ENCODE measurements at regions of chr3 and their contacts with region 1.

Region 1: GRCh38 chr3:196502775-196503195 is 783 bp downstream of the RNF168 start:
- DNase-seq: peak in 1 of 2 donors; percentile 81
- H3K4me3 ChIP-seq: peak overlapping the region; percentile 76 to 90
- H3K27ac ChIP-seq: peak overlapping the region; percentile 94 to 97
- H3K4me1 ChIP-seq: peaks cover 3 to 10% of the 10 kb centered on the region in 2 donors
- H3K27me3 ChIP-seq: no peaks in the 10 kb centered on the region
- CTCF ChIP-seq: no peak

Region 2: DNA sequence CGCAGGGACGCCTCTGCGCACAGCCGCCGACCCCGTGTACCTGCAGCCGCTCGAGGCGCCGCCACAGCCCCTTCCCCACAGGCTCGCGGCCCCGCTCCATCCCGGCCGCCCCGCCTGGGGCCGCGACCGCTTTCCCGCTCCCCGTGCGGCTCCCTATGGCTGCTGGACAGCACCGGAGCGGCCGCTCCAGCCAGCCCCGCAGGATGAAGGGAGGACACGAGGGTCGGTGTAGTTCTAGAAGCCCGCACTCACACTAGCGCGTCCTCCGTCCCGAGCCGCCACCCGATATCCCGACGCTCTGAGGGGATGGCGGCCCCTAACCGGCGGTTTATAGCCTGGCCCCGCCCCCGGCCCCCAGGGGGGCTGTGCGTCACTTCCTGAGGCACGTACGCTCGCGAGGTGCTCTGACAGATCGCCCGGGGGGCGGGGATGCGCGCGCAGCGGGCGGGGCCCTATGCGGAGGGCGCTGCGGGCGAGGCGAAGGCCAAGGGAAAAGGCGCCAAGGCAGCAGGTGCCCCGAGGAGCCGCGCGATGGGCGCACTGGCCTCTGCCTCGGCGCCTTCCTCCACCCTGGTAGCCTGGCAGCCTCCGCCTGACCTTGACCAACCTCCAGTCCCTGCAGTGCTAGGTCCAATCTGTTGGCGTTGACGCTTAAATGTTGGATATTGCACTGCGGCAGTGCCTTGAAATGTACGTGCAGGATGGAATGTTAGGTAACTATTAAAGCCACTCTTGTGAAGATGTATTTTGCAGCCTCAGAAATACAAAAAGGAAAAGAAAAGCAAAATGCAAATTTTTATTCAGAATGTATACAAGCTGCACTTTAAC is 420.8 kb before region 1 on chr3 and contains the start of gene TFRC:
- intact Hi-C with region 1: loop called (anchors 5 kb)
- DNase-seq: peak; percentile 66 to 95
- H3K4me3 ChIP-seq: peak within 1 kb of the TSS; percentile 74 to 92
- H3K27ac ChIP-seq: peak within 1 kb of the TSS; percentile 84
- H3K4me1 ChIP-seq: peaks cover 0 to 8% of the 10 kb centered on the region in 2 donors
- H3K27me3 ChIP-seq: no peaks in the 10 kb centered on the region
- CTCF ChIP-seq: no peak
- total RNA-seq, gene TFRC: 30.1 TPM

Region 3: DNA sequence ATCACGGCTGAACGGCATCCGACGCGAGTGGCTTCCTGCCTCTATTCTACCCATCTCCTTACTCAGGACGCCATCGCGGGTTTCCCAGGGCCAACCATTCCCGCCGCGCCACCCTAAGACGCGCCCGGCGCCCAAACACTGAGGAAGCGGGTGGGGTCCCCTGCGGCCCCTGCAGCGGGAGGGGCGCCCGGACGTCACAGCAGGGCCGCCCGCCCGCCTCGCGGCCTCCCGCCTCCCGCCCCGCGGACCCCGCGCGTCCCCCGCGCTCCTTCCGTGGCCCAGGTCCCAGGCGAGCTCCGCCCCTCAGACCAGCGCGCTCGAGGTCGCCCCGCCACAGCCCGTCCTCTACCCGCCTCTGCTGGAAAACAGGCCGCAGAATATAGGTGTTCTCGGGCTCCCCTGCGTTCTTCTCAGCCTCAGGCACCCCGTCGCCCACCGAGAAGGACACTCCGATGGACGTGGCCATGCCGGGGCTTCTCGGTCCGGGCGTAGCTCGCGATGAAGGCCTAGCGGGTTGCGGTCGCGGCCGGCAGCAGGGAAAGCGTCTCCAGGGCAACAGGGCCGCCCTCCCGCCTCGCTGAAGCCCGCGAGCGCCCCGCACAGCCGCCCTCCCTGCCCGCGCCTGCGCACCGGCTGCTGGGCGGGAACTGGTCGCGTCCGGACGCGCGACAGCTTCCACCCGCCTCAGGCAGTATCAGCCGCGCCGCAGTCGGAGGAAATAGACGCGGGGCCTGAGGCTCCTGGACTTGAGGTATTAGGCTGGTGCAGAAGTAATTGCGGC is 184.9 kb before region 1 on chr3 and contains the start of gene DYNLT2B:
- intact Hi-C with region 1: loop called (anchors 2 kb)
- DNase-seq: peak; percentile 49 to 91
- H3K4me3 ChIP-seq: peak within 1 kb of the TSS; percentile 92 to 97
- H3K27ac ChIP-seq: peak within 1 kb of the TSS; percentile 88 to 89
- H3K4me1 ChIP-seq: no peaks in the 10 kb centered on the region
- H3K27me3 ChIP-seq: no peaks in the 10 kb centered on the region
- CTCF ChIP-seq: no peak
- total RNA-seq, gene DYNLT2B: not detected

Region 4: DNA sequence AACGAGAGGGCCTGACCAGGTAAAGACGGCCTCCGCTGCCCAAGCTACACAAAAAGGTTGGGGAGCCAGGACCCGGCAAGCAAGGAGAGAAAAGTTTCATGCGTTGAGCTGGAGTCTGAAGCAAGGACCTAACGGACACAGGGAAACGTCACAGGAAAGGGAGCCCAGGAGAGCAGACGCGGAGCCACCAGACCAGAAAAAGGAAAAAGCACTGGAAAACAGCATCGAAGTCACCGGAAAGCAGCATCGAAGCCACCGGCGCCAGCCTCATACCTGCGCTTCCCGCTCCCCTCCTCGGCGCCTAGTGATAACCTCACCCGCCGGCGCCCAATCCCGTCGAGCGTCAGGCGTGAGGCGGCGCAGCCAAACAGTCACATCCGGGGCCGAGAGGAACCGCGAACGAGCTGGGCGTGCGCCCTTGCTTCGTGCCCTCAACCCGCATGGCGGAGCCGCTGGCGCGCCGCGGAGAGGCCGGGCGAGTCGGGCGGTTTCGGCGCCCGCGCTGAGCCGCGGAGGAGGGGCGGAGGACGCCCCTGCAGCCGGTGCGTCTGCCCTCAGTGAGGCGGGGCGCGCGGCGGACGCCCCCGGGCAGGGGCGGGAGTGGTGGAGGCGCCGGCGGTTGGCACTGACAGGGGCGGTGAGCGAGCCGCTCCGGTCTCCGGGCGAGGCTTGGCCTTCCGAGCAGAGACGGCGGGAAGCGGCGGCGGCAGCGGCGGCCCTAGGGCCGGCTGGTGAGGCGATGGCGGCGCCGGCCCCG is 65.6 kb after region 1 on chr3 and contains the starts of genes FBXO45 and WDR53:
- intact Hi-C with region 1: loop called (anchors 2 kb)
- DNase-seq: peak; percentile 86 to 96
- H3K4me3 ChIP-seq: peak within 1 kb of the TSS; percentile 92 to 94
- H3K27ac ChIP-seq: peak within 1 kb of the TSS; percentile 85 to 92
- H3K4me1 ChIP-seq: peaks cover 8 to 14% of the 10 kb centered on the region in 2 donors
- H3K27me3 ChIP-seq: no peaks in the 10 kb centered on the region
- CTCF ChIP-seq: no peak
- total RNA-seq, gene FBXO45: 0.64 TPM
- total RNA-seq, gene WDR53: 0.21 TPM

Region 5: DNA sequence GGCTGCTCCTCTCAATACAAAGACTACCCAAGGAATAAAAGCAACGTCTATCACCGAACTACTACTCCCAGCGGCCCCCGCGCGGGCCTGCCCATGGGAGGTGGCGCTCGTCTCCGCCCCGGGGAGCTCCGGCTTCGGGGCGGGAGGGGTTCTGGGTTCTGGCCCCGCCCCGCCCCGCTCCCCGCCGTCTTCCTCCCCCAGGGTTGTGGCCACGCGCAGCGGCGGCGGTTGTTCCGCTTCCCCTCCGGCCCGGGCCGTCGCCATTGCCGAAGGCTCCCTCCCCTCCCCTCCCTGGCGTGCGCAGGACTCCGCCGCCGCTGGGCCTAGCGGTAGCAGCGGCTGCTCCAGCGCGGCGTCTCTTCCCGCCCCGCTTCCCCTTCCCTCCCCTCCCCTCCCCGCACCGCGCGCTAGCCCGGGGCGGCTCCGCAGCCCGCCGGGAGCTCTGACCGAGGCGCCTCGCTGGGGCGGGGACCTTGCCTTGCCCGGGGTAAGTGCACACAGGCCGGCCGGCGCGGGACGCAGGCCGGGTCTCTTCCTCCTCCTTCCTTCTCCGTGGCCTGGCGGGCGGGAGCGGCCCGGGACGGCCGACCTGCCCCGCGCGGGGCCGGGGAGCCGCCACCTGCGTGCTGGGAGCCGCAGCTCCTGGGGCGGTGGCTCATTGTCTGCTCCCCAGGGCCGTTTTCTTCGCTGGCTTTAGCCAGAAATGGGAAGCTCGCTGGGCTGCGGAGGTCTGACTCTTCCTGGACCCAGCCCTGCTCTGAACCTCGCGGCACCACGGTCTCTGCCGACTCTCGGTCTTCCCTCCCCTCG is 237.1 kb after region 1 on chr3 and contains the start of gene PAK2:
- intact Hi-C with region 1: loop called (anchors 5 kb)
- DNase-seq: peak; percentile 70 to 95
- H3K4me3 ChIP-seq: peak within 1 kb of the TSS; percentile 80 to 92
- H3K27ac ChIP-seq: peak within 1 kb of the TSS; percentile 98 to 99
- H3K4me1 ChIP-seq: peaks cover 4 to 12% of the 10 kb centered on the region in 2 donors
- H3K27me3 ChIP-seq: no peaks in the 10 kb centered on the region
- CTCF ChIP-seq: no peak
- total RNA-seq, gene PAK2: 24.4 TPM

Region 6: DNA sequence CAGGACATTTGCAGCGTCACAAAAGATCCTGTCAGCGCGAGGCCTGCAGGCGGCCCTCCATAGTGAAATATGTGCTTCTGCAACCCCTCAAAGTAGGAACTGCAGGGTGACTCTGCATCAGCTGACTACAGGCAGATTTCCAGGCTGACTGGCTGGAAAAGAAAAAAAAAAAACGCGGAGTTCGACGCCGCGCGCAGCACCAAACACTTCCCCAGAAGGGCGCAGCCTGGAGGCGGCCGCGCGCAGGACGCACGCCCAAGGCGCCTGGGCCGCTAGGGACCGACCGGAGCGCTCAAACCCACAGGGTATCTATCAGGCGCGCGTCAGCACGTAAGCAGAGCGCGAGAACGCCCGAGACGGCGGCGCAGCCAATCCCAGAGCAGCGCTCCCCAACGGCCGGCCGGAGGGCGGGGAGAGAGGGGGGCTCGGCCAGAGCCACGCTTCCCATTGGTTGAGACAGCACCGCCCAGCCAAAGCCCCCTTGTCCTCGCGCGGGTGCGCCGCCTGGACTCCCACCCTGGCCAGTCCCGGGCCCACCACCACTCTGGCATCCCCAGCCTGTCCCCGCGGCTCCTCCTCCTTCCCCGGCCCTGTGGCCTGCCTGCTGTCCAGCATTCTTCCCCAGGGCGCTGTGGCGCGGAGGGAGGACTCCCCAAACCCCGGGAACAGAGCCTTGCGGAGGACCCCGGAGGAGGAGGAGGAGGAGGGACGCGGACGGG is 1051.9 kb after region 1 on chr3:
- intact Hi-C with region 1: loop called (anchors 2 kb)
- DNase-seq: peak; percentile 75 to 97
- H3K4me3 ChIP-seq: peak overlapping the region; percentile 69 to 80
- H3K27ac ChIP-seq: peak overlapping the region; percentile 82 to 93
- H3K4me1 ChIP-seq: peaks cover 0 to 12% of the 10 kb centered on the region in 2 donors
- H3K27me3 ChIP-seq: no peaks in the 10 kb centered on the region
- CTCF ChIP-seq: peak; percentile 41 to 60 (median 47)